IMR-90 (cell line): ENCODE measurements at regions of chr10 and their contacts with region 1.

Region 1: DNA sequence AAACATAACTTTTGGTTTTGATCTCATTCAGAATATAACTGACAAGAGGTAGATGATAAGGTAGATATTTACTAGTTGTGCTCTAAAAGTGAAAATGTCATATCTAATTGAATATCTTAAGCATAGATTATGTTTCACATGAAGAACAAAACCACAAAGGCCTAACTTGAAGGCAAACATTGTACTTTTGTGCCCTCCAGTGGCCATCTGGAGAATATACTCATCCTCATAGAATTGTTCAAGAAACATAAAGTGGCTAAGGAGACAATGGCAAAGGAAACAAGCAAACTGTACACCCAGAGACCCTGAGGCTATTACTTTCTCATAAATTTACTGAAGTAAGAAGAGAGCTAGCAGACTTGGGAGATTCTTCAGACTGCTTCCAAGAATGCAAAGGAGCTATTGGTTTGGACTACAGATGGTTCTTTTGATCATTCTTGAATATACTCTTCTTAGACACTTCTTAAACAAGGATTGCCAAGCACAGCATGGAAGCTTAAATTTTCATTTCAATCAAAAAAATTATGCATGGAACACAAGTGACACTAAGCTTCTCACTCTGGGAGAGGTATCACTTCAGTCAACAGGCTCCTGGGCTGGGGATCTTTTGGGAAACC is 98.2 kb upstream of the DKK1 start:
- DNase-seq: peak; percentile 81
- ATAC-seq: peak; percentile 79
- H3K4me3 ChIP-seq: no peak overlapping the region
- H3K27ac ChIP-seq: no peak overlapping the region
- H3K4me1 ChIP-seq: peaks cover 3% of the 10 kb centered on the region
- H3K27me3 ChIP-seq: no peaks in the 10 kb centered on the region
- CTCF ChIP-seq: peak; percentile 89
- POLR2A ChIP-seq: 0 out of 2 replicates have a peak, but pooled peaks have one; percentile 30
- RAD21 ChIP-seq: peak; percentile 91

Region 2: GRCh38 chr10:50988792-50989191 is 1227.1 kb before region 1 on chr10:
- CTCF ChIA-PET with region 1: no interaction called
- POLR2A ChIA-PET with region 1: no interaction called
- dilution Hi-C with region 1: no loop called
- in situ Hi-C with region 1: loop called (anchors 10 kb)
- intact Hi-C with region 1: no loop called
- DNase-seq: peak; percentile 53
- ATAC-seq: no peak
- H3K4me3 ChIP-seq: peak overlapping the region; percentile 22; the same call in 1 of the 2 replicates
- H3K27ac ChIP-seq: peak overlapping the region; percentile 33; the same call in 1 of the 2 replicates
- H3K4me1 ChIP-seq: no peaks in the 10 kb centered on the region; the same call in 1 of the 2 replicates
- H3K27me3 ChIP-seq: no peaks in the 10 kb centered on the region
- CTCF ChIP-seq: peak; percentile 60
- POLR2A ChIP-seq: no peak
- RAD21 ChIP-seq: peak; percentile 53

Region 3: GRCh38 chr10:51001587-51001986 is 1214.3 kb before region 1 on chr10:
- CTCF ChIA-PET with region 1: interaction called, 3 read pairs
- POLR2A ChIA-PET with region 1: no interaction called
- dilution Hi-C with region 1: no loop called
- in situ Hi-C with region 1: loop called (anchors 10 kb)
- intact Hi-C with region 1: loop called (anchors 2 kb)
- DNase-seq: no peak
- ATAC-seq: peak; percentile 53
- H3K4me3 ChIP-seq: no peak overlapping the region
- H3K27ac ChIP-seq: no peak overlapping the region
- H3K4me1 ChIP-seq: peaks cover 14% of the 10 kb centered on the region
- H3K27me3 ChIP-seq: no peaks in the 10 kb centered on the region
- CTCF ChIP-seq: peak; percentile 70
- POLR2A ChIP-seq: no peak
- RAD21 ChIP-seq: peak; percentile 65

Region 4: GRCh38 chr10:51186361-51186760 is 1029.5 kb before region 1 on chr10:
- CTCF ChIA-PET with region 1: no interaction called
- POLR2A ChIA-PET with region 1: no interaction called
- dilution Hi-C with region 1: no loop called
- in situ Hi-C with region 1: no loop called
- intact Hi-C with region 1: no loop called
- DNase-seq: no peak
- ATAC-seq: no peak
- H3K4me3 ChIP-seq: no peak overlapping the region
- H3K27ac ChIP-seq: no peak overlapping the region
- H3K4me1 ChIP-seq: 0 out of 2 replicates have a peak, but pooled peaks cover 2% of the 10 kb centered on the region
- H3K27me3 ChIP-seq: no peaks in the 10 kb centered on the region
- CTCF ChIP-seq: no peak
- POLR2A ChIP-seq: no peak
- RAD21 ChIP-seq: no peak

Region 5: DNA sequence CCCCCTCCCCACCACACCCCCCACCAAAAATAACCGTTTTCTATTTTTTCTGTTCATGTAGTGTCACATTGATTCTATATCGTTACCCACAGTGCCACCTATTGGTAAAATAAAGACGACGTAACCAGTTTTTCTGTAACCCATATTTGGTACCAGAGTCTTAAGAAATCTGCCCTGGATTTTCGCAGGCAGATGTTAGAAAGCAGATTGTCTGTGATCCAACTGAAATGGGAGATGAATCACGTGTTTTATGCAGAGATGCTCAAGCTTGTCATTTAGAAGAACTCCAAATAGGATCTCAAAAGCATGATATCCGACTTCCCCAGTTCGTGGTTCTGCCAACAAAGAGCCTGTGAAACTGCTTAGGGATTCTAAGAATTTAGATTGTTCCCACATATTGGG is 255.4 kb before region 1 on chr10:
- CTCF ChIA-PET with region 1: interaction called, 4 read pairs
- POLR2A ChIA-PET with region 1: no interaction called
- dilution Hi-C with region 1: no loop called
- in situ Hi-C with region 1: no loop called
- intact Hi-C with region 1: loop called (anchors 2 kb)
- DNase-seq: peak; percentile 76
- ATAC-seq: peak; percentile 66
- H3K4me3 ChIP-seq: no peak overlapping the region
- H3K27ac ChIP-seq: no peak overlapping the region
- H3K4me1 ChIP-seq: no peaks in the 10 kb centered on the region
- H3K27me3 ChIP-seq: no peaks in the 10 kb centered on the region
- CTCF ChIP-seq: peak; percentile 63
- POLR2A ChIP-seq: no peak
- RAD21 ChIP-seq: peak; percentile 73

Region 6: DNA sequence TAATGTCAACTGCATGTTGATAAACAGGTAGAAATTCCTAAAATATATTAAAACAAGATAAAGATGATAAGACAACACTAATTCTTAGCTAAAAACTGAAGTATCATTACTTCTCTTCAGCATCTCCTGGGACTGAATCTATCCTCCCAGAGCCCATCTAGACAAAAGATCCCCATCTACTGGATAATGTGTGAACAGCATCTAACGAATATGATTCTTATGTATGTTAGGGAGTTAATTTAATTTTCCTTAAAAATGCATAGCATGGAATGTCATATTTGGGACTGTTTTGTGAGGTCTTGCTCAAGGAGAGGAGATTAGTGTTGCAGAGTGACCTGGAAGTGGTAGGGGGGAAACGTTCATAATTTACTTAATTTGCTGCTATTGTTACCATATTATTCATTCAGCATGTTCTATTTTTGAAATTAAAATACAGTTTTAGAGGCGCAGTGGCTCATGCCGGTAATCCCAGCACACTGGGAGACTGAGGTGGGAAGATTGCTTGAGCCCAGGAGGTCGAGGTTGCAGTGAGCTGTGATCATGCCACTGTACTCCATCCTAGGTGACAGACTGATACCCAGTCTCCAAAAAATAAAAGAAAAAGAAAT is 211.4 kb before region 1 on chr10:
- CTCF ChIA-PET with region 1: no interaction called
- POLR2A ChIA-PET with region 1: no interaction called
- dilution Hi-C with region 1: no loop called
- in situ Hi-C with region 1: no loop called
- intact Hi-C with region 1: loop called (anchors 10 kb)
- DNase-seq: peak; percentile 67
- ATAC-seq: peak; percentile 85
- H3K4me3 ChIP-seq: no peak overlapping the region
- H3K27ac ChIP-seq: no peak overlapping the region
- H3K4me1 ChIP-seq: peaks cover 1% of the 10 kb centered on the region; the same call in 1 of the 2 replicates
- H3K27me3 ChIP-seq: no peaks in the 10 kb centered on the region
- CTCF ChIP-seq: peak; percentile 75
- POLR2A ChIP-seq: no peak
- RAD21 ChIP-seq: peak; percentile 78

Region 7: GRCh38 chr10:52027055-52027705 is 188.7 kb before region 1 on chr10:
- CTCF ChIA-PET with region 1: no interaction called
- POLR2A ChIA-PET with region 1: no interaction called
- dilution Hi-C with region 1: no loop called
- in situ Hi-C with region 1: no loop called
- intact Hi-C with region 1: loop called (anchors 5 kb)
- DNase-seq: peak; percentile 82
- ATAC-seq: peak; percentile 84
- H3K4me3 ChIP-seq: peak overlapping the region; percentile 27; the same call in 1 of the 2 replicates
- H3K27ac ChIP-seq: peak overlapping the region; percentile 66; the same call in 1 of the 2 replicates
- H3K4me1 ChIP-seq: peaks cover 6% of the 10 kb centered on the region
- H3K27me3 ChIP-seq: no peaks in the 10 kb centered on the region
- CTCF ChIP-seq: no peak
- POLR2A ChIP-seq: no peak
- RAD21 ChIP-seq: no peak

Region 8: DNA sequence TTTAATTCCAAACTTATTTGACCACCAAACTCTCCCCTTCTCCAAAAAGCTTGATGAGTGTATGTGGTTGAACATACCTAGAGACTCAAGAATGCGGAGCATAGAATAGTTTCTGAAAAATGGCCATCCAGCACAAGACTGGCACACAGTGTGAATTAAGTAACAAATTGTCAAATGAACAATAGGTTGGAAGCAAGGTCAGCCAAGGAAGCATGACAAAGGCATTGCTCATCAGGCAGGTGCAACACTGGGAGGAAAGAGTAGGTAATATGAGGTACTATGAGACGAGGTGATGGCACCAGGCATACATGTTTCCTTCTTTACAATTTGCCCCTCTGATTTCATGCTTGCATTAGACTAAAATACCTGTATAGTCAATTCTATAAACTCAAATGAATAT is 171.9 kb after region 1 on chr10:
- CTCF ChIA-PET with region 1: no interaction called
- POLR2A ChIA-PET with region 1: no interaction called
- dilution Hi-C with region 1: no loop called
- in situ Hi-C with region 1: no loop called
- intact Hi-C with region 1: no loop called
- DNase-seq: no peak
- ATAC-seq: no peak
- H3K4me3 ChIP-seq: no peak overlapping the region
- H3K27ac ChIP-seq: no peak overlapping the region
- H3K4me1 ChIP-seq: no peaks in the 10 kb centered on the region
- H3K27me3 ChIP-seq: no peaks in the 10 kb centered on the region
- CTCF ChIP-seq: no peak
- POLR2A ChIP-seq: no peak
- RAD21 ChIP-seq: no peak

Region 9: DNA sequence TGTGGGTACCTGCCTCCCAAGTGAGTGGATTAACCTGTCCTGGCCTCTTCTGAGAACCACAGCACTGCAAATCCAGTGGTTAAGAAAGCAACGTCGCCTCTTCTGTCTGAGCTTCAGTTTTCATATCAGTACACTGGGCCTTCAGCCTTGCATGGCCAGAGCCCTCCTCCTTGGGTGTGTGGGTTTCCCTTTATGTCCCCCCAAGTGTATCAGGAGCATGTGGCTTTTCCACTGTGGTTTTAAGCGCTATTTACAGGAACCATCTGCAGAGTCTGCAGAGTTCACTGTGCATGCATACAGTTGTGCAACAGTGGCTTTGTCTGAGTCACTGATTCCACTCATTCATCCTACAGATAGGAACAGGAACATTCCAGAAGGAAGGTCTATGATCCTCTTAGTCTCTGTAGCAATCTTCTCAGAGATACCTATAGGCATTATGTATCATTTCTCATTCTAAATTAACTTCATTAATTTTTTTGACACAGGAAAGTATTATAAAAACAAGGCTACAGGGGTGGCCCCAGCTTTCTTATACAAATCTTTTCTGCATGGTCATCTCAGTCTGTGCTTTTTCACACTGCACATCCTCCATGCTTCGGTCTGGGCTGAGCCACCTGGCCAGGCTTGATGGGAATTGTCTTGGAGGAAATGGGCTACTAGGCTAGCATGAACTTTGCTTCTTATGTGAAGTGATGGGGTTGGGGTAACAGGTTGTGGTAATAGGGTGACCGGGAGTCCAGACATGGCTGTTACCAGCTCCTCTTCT is 539.6 kb after region 1 on chr10:
- CTCF ChIA-PET with region 1: no interaction called
- POLR2A ChIA-PET with region 1: no interaction called
- dilution Hi-C with region 1: no loop called
- in situ Hi-C with region 1: no loop called
- intact Hi-C with region 1: no loop called
- DNase-seq: peak; percentile 70
- ATAC-seq: peak; percentile 65
- H3K4me3 ChIP-seq: no peak overlapping the region
- H3K27ac ChIP-seq: no peak overlapping the region
- H3K4me1 ChIP-seq: peaks cover 3% of the 10 kb centered on the region; the same call in 1 of the 2 replicates
- H3K27me3 ChIP-seq: no peaks in the 10 kb centered on the region; the same call in 1 of the 2 replicates
- CTCF ChIP-seq: no peak
- POLR2A ChIP-seq: no peak
- RAD21 ChIP-seq: no peak